Activated naive CD4-positive, alpha-beta T cell treated with anti-CD3 and anti-CD28 coated beads for 36 hours (primary cell): ENCODE measurements at regions of chr4 and their contacts with region 1.

Region 1: GRCh38 chr4:105179539-105180401 is 33.1 kb downstream of the TET2 start:
- DNase-seq: no peak
- H3K4me3 Mint-ChIP-seq: no peak overlapping the region
- H3K27ac Mint-ChIP-seq: no peak overlapping the region
- H3K4me1 Mint-ChIP-seq: peaks cover 51% of the 10 kb centered on the region
- H3K27me3 Mint-ChIP-seq: no peaks in the 10 kb centered on the region

Region 2: DNA sequence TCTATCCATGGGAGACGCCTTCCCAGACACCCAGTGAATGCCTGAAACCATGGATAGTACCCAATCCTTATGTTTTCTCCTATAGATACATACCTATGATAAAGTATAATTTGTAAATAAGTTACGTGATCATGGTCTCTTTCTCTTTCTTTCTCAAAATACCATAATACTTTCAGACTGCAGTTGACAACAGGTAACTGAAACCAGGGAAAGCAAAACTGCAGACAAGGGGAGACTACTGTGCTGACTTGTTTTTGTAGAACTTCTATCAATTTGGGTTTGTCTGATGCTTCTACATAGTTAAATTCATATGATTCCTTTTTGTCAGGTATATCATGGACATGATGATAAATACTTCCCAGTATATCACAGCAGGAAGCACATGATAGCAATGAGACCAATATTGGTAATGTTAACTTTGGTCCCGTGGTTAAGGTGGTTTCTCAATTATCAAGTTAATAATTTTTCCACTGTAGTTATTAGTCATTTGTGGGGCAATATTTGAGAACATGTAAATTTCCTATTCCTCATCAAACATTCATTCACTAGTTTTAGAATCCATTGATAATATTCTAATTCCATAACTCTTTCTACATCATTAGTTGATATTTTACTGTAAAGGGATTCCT is 331.1 kb before region 1 on chr4:
- CTCF ChIA-PET with region 1: no interaction called
- intact Hi-C with region 1: no loop called
- DNase-seq: no peak
- H3K4me3 Mint-ChIP-seq: no peak overlapping the region
- H3K27ac Mint-ChIP-seq: no peak overlapping the region
- H3K4me1 Mint-ChIP-seq: no peaks in the 10 kb centered on the region
- H3K27me3 Mint-ChIP-seq: no peaks in the 10 kb centered on the region

Region 3: GRCh38 chr4:105191621-105192210 is 11.9 kb after region 1 on chr4:
- CTCF ChIA-PET with region 1: no interaction called
- intact Hi-C with region 1: loop called (anchors 1 kb)
- DNase-seq: no peak
- H3K4me3 Mint-ChIP-seq: no peak overlapping the region
- H3K27ac Mint-ChIP-seq: peak overlapping the region; percentile 87
- H3K4me1 Mint-ChIP-seq: peaks cover 85% of the 10 kb centered on the region
- H3K27me3 Mint-ChIP-seq: no peaks in the 10 kb centered on the region